KBM-7 (cell line): ENCODE measurements at regions of chr15 and their contacts with region 1.

Region 1: DNA sequence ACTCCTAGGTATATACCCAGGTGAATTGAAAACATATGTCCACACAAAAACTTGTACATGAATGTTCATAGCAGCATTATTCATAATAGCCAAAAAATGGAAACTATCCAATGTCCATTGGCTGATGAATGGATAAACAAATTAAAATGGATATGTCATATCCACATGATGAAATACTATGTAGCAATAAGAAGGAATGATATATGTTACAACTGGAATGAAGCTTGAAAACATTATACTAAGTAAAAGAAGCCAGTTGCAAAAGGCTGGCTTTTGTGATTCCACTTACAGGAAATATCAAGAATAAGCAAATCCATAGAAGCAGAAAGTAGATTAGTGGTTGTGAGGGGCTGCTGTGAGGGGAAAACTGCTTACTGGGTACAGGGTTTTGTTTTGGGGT is 33.7 kb downstream of the BNC1 start:
- DNase-seq: no peak

Region 2: GRCh38 chr15:83559310-83559966 is 308.6 kb after region 1 on chr15:
- in situ Hi-C with region 1: loop called (anchors 25 kb)
- DNase-seq: peak; percentile 85